ENCODE measurements at regions of chr12 and their contacts with region 1.

Region 1: DNA sequence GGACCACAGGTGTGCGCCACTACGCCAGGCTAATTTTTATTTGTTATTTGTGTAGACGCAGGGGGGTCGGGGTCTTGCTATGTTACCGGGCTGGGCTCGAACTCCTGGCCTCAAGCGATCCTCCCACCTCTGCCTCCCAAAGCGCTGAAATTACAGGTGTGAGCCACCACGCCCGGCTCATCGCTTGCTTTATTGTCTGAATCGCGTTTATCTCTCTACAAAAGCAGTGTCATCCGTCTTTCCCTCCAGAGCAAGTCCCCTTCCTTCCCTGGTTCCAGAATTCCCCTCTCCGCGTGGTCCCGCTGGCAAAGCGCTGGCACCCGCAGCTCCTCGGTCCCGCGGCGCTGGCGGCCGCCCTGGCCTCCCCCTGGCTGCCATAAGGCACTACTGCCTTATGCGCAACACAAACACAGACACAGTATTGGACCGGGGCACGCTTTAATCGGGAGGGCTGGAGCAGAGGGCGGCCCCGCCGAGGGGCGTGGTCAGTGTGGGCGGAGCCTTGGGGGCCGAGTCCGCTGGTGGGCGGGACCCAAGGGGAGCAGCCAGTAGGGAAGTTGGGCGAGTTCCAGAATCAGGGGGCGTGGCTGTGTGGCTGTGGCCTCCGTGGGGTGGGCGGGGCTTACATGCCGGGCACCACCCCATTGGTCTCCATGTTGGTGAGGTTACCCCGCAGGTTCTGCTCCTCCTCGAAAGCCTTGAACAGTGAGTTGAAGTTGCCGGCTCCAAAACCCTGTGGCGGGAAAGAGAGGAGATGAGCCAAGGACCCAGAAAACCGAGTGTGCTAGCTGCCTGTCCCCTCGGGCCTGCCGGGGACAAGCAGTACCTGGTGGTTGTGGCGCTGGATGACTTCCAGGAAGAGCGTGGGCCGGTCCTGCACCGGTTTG is 19.3 kb downstream of the HPD start:
- DNase-seq: peak; percentile 99 to 100 (median 100)
- ATAC-seq: peak; percentile 97
- H3K4me3 ChIP-seq: peak overlapping the region; percentile 73 to 95
- H3K4me3 Mint-ChIP-seq: peak overlapping the region; percentile 97
- H3K27ac ChIP-seq: peak overlapping the region; percentile 34 to 54
- H3K27ac Mint-ChIP-seq: peak overlapping the region; percentile 88
- H3K4me1 ChIP-seq: peaks cover 7% of the 10 kb centered on the region
- H3K4me1 Mint-ChIP-seq: peaks cover 13% of the 10 kb centered on the region
- H3K27me3 ChIP-seq: no peaks in the 10 kb centered on the region
- H3K27me3 Mint-ChIP-seq: no peaks in the 10 kb centered on the region
- CTCF ChIP-seq: peak; percentile 27

Region 2: DNA sequence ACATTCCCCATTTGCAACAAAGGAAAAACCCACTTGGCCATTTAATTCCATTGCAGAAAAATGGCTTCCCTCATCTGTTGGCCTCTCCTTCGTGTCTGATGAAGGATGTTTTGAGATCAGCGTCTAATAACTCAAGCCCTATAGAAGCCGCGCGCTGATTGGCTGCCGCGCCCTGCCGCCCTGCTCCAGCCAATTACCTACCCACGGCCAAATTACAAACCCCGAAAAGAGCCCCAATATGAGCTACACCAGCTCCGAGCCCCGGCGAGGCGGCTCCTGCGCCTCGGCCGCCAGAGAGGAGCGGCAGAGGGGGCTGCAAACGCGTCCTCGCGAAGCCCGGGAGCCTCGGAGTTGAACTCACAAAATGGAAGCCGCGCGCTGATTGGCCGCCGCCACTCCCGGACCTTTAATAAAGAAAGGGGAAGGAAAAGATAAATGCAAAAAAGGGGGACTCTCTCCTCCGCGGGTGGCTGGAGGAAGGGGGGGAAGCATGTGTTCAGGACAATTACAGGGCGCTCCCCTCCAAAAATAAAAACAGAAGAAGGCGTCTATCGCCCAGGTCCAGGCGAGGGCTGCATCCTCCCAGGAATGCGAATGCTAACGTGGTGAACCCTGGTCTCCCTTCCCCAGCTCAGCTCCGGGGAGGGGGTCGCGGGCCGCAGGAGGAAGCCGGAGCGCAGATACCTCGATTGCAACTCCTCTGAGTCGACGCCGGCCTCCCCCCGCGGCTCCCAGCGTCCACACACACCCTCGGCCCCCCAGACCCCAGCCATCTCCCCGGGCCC is 36.3 kb before region 1 on chr12:
- CTCF ChIA-PET with region 1: interaction called, 3 read pairs
- POLR2A ChIA-PET with region 1: interaction called, 16 read pairs
- intact Hi-C with region 1: loop called in 1 of 2 experiments (anchors 2 kb)
- DNase-seq: peak; percentile 79 to 95 (median 88)
- ATAC-seq: peak; percentile 43
- H3K4me3 ChIP-seq: peak overlapping the region; percentile 73 to 82
- H3K4me3 Mint-ChIP-seq: peak overlapping the region; percentile 94
- H3K27ac ChIP-seq: peak overlapping the region; percentile 94 to 98
- H3K27ac Mint-ChIP-seq: peak overlapping the region; percentile 99
- H3K4me1 ChIP-seq: peaks cover 34% of the 10 kb centered on the region
- H3K4me1 Mint-ChIP-seq: peaks cover 28% of the 10 kb centered on the region
- H3K27me3 ChIP-seq: no peaks in the 10 kb centered on the region
- H3K27me3 Mint-ChIP-seq: no peaks in the 10 kb centered on the region
- CTCF ChIP-seq: no peak

Measured in CD8-positive, alpha-beta T cell (primary cell).